ENCODE measurements at regions of chr1 and their contacts with region 1.

Region 1: DNA sequence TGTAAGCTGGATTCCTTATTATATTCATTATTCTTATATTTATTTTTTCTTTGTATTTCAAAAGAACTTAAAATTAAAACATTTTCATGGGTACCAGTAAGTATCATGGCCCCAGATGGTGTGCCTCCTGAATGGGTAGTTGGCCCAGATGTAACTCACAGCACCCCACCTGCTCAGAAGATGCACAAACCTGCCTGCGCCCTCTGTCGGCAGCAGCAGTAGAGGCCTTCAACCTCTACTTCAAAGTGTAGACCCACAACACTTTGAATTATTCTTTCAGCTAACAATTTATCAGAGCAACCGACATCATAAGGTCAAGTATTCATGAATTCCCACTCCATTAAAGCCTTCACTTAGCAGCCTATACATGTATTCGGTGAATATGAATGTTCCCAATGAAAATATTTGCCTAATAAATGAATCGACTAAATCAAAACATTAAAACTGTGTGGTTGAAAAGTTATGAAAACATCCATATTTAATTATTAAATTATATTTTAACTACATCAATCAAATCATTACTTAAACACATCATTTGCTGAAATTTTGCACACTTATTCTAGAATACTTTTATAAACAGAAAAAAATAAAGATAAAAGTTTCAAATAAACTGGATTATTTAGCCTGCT is 25.4 kb downstream of the PIGM start:
- DNase-seq: peak; percentile 82
- H3K4me3 Mint-ChIP-seq: no peak overlapping the region
- H3K27ac Mint-ChIP-seq: no peak overlapping the region
- H3K4me1 Mint-ChIP-seq: no peaks in the 10 kb centered on the region
- H3K27me3 Mint-ChIP-seq: peaks cover 2% of the 10 kb centered on the region

Region 2: GRCh38 chr1:159798893-159799292 is 207.5 kb before region 1 on chr1:
- CTCF ChIA-PET with region 1: interaction called, 75 read pairs
- POLR2A ChIA-PET with region 1: interaction called, 3 read pairs
- intact Hi-C with region 1: loop called (anchors 1 kb)
- DNase-seq: peak; percentile 61
- H3K4me3 Mint-ChIP-seq: no peak overlapping the region
- H3K27ac Mint-ChIP-seq: no peak overlapping the region
- H3K4me1 Mint-ChIP-seq: peaks cover 13% of the 10 kb centered on the region
- H3K27me3 Mint-ChIP-seq: peaks cover 3% of the 10 kb centered on the region

Region 3: GRCh38 chr1:159936273-159936904 is 70.0 kb before region 1 on chr1:
- CTCF ChIA-PET with region 1: interaction called, 311 read pairs
- POLR2A ChIA-PET with region 1: no interaction called
- intact Hi-C with region 1: loop called (anchors 1 kb)
- DNase-seq: peak; percentile 90
- H3K4me3 Mint-ChIP-seq: no peak overlapping the region
- H3K27ac Mint-ChIP-seq: no peak overlapping the region
- H3K4me1 Mint-ChIP-seq: peaks cover 6% of the 10 kb centered on the region
- H3K27me3 Mint-ChIP-seq: no peaks in the 10 kb centered on the region

Region 4: GRCh38 chr1:159970932-159971342 is 35.5 kb before region 1 on chr1:
- CTCF ChIA-PET with region 1: interaction called, 23 read pairs
- POLR2A ChIA-PET with region 1: no interaction called
- intact Hi-C with region 1: no loop called
- DNase-seq: no peak
- H3K4me3 Mint-ChIP-seq: no peak overlapping the region
- H3K27ac Mint-ChIP-seq: no peak overlapping the region
- H3K4me1 Mint-ChIP-seq: no peaks in the 10 kb centered on the region
- H3K27me3 Mint-ChIP-seq: peaks cover 23% of the 10 kb centered on the region

Region 5: GRCh38 chr1:160031365-160032164 is 25.1 kb after region 1 on chr1 and contains the start of gene PIGM:
- CTCF ChIA-PET with region 1: interaction called, 52 read pairs
- POLR2A ChIA-PET with region 1: no interaction called
- intact Hi-C with region 1: no loop called
- DNase-seq: peak; percentile 97
- H3K4me3 Mint-ChIP-seq: peak within 1 kb of the TSS; percentile 96
- H3K27ac Mint-ChIP-seq: peak within 1 kb of the TSS; percentile 89
- H3K4me1 Mint-ChIP-seq: peaks cover 33% of the 10 kb centered on the region
- H3K27me3 Mint-ChIP-seq: no peaks in the 10 kb centered on the region
- total RNA-seq, gene PIGM: 4.4 to 4.7 TPM

Region 6: DNA sequence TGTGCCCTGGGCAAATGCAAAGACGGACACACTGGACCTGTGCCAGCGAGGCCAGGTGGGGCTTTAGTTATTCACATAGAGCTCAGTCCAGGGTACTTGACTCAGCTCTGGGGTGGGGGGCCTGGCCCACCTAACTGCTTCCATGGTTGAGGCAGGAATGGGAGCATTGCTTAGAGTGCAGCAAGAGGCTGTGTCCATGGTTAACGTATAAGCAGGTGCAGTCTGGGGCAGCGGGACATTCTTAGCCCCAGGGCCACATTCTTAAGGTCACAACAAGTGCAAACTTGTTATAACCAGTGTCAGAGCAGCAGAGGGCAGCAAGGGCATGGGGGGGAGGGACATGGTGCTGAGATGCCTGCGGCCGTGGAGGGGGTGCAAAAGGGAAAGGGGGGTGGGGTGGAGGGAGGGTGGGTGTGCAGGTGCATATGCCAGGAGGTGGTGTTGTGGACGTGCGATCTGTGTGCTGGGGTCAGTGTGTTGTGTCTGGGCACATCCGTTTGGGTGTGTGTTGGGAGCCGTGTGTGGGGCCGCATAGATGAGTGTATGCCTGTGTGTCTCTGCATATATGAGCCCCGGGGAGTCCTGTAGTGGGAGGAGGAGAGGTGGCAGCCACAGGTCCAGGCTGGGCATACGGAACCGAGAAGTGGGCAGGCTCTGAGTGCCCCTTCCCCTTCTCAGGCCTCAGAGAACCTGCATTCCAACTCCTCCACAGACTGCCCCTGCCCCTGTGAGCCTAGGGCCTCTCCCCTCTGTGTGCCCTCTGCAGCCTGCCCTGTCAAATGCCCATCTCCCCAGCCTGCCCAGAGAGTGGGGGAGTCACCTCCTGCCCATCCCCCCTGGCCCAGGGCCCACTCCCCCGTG is 55.2 kb after region 1 on chr1:
- CTCF ChIA-PET with region 1: no interaction called
- POLR2A ChIA-PET with region 1: no interaction called
- intact Hi-C with region 1: no loop called
- DNase-seq: no peak
- H3K4me3 Mint-ChIP-seq: no peak overlapping the region
- H3K27ac Mint-ChIP-seq: no peak overlapping the region
- H3K4me1 Mint-ChIP-seq: no peaks in the 10 kb centered on the region
- H3K27me3 Mint-ChIP-seq: peaks cover 12% of the 10 kb centered on the region

Region 7: DNA sequence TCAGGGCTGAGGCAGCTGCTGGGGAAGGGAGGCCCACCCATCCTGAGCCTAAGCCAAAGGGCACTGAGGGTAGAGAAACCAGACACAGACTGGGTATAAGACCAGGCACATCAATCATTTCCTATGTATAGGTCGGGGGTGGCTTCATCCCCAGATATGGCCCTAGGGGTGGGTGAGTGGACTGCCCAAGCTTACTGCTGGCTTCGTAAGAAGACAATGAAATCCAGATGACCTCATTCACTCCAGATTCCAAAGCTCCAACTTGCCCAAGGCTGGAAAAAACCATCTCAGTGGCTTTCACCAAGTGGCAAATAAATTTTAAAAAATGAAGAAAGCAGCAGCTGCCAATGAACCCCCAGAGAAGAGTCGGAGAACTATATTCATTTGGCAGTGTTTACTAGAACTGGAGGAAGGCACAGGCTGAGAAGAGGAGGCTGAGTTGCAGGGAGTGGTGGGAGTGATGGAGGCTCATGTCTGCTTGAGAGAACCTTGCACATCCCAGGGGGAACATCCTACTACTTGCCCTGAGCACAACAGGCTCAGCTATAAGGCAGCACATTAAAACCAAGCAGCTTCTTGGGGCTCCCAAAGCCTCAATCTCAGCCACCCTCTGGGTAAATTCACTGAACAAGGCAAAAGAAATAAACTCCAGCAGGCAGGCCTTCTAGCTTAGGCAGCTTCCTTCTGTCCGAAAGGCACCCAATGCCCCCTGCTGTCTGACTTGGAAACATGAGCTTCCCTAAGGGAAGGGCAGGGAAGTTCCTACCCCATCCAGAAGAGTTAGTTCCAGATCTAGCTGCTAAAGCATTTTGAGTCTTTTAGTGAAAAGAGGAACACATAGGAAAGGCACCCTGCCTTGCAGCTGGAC is 212.9 kb after region 1 on chr1:
- CTCF ChIA-PET with region 1: no interaction called
- POLR2A ChIA-PET with region 1: no interaction called
- intact Hi-C with region 1: no loop called
- DNase-seq: no peak
- H3K4me3 Mint-ChIP-seq: no peak overlapping the region
- H3K27ac Mint-ChIP-seq: no peak overlapping the region
- H3K4me1 Mint-ChIP-seq: no peaks in the 10 kb centered on the region
- H3K27me3 Mint-ChIP-seq: no peaks in the 10 kb centered on the region